ENCODE measurements at regions of chr4 and their contacts with region 1.

Region 1: DNA sequence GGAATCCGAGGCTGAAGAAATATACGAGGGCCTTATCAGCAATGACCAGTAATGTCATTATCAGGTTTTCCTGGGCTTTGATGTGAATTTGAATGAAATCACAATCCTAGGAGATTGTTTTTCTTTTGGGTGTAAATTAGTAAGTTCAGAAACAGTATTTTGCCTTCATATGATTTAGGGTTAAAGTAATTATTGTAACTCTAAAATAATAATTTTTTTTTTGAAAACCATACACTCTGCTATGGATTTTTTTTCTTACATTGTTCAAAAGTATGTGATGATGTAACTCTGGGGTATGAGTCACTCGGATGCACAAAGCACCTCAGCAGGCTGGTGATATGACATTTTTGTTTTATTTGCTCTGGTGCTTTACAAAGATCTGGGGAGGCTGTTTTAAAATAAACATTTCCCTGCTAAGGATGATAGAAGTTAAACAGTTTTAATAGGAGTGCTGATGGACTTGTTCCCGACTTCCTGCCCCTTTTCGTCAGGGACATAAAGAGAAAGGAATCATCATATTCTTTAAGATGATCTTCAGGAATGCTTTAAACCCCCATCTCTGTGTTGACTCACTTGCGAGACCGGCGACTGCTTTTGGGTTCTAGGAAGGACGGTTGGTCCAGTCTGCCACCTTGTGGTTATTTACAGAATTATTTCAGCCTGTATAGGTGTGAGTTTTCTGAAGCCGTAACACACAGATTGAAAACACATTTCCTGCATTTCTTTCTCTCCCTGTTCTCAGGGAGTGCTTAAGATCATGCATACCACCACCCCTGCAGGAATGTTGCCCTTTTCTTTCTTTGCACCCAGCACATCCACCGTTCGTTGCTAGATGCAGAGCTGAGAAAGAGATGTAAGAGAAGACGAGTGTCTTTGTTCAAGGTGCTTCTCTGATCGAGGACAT is 72.5 kb downstream of the RAPGEF2 start:
- DNase-seq: peak; percentile 56 to 82 (median 71)
- H3K4me3 ChIP-seq: peak overlapping the region in 1 of 4 donors; percentile 3
- H3K27ac ChIP-seq: no peak overlapping the region
- H3K4me1 ChIP-seq: peaks cover 0 to 19% of the 10 kb centered on the region in 2 donors
- H3K27me3 ChIP-seq: no peaks in the 10 kb centered on the region
- CTCF ChIP-seq: peak; percentile 78 to 91 (median 86)
- POLR2A ChIP-seq: no peak

Region 2: GRCh38 chr4:158938220-158939044 is 236.9 kb before region 1 on chr4:
- intact Hi-C with region 1: no loop called
- DNase-seq: no peak
- H3K4me3 ChIP-seq: no peak overlapping the region
- H3K27ac ChIP-seq: no peak overlapping the region
- H3K4me1 ChIP-seq: no peaks in the 10 kb centered on the region
- H3K27me3 ChIP-seq: no peaks in the 10 kb centered on the region
- CTCF ChIP-seq: no peak
- POLR2A ChIP-seq: no peak

Region 3: GRCh38 chr4:159048166-159048886 is 127.0 kb before region 1 on chr4:
- intact Hi-C with region 1: no loop called
- DNase-seq: peak; percentile 37 to 89 (median 69)
- H3K4me3 ChIP-seq: peak overlapping the region in 1 of 4 donors; percentile 1
- H3K27ac ChIP-seq: no peak overlapping the region
- H3K4me1 ChIP-seq: peaks cover 7 to 9% of the 10 kb centered on the region in 2 donors
- H3K27me3 ChIP-seq: peaks cover 12% of the 10 kb centered on the region
- CTCF ChIP-seq: no peak
- POLR2A ChIP-seq: no peak

Region 4: GRCh38 chr4:159102622-159103383 is 72.5 kb before region 1 on chr4 and contains the start of gene RAPGEF2:
- intact Hi-C with region 1: loop called (anchors 10 kb)
- DNase-seq: peak; percentile 91 to 95 (median 93)
- H3K4me3 ChIP-seq: peak within 1 kb of the TSS; percentile 60 to 97 (median 88)
- H3K27ac ChIP-seq: peak within 1 kb of the TSS; percentile 27 to 94 (median 89)
- H3K4me1 ChIP-seq: peaks cover 9 to 33% of the 10 kb centered on the region in 2 donors
- H3K27me3 ChIP-seq: no peaks in the 10 kb centered on the region
- CTCF ChIP-seq: no peak
- POLR2A ChIP-seq: peak; percentile 59 to 91
- total RNA-seq, gene RAPGEF2: 19.1 to 53.9 (median 28.9) TPM

Region 5: DNA sequence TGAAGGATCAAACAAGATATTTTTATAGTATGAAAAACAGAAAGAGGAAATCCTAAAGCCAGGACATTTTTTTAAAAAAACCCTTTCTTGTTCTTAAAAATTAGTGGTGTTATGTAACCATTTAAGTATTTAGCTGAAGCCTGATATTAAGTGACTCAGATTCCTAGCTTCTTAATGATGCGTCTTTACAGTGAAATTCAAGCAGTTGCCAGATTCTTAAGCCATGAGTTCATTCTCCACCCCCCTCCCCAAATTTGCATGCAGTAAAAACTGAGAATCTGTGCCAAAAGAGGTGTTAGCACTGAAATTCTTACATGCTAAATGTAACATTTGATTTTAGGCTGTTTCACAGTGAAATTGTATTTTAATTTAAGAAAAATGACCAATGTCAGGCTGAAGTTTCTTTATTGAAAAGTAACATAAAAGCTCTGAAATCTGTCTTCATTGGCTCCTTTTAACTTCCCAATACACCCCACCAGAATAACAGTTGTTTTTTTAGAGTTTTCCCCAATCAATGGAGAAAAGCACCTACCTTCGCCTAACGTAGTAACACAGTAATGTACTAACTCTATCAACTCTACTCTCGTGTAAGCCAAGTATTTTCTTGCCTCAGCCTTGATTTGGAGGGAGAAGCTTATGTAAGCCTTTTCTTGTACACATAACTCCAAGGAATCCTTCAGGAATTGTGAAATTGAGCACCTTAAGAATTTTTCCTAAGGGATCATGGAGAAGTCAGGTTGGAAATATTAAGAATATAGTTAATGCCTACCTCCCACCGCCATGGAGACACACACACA is 108.6 kb after region 1 on chr4:
- intact Hi-C with region 1: no loop called
- DNase-seq: no peak
- H3K4me3 ChIP-seq: no peak overlapping the region
- H3K27ac ChIP-seq: no peak overlapping the region
- H3K4me1 ChIP-seq: peaks cover 0 to 20% of the 10 kb centered on the region in 2 donors
- H3K27me3 ChIP-seq: no peaks in the 10 kb centered on the region
- CTCF ChIP-seq: no peak
- POLR2A ChIP-seq: no peak

Measured in adrenal gland (tissue), 19 donors.